Activated T-helper 2 cell treated with anti-CD3 and anti-CD28 coated beads, Interferon-gamma antibody, Interleukin-2, Interleukin-4, amounts not matched to agents 10 μg/mL and 5 μg/mL and 100 μg/mL, durations not matched to agents 14 hours and 24 hours and 36 hours (primary cell): ENCODE measurements at regions of chr5 and their contacts with region 1.

Region 1: GRCh38 chr5:76601470-76601869 is 21.7 kb downstream of the F2RL2 start:
- DNase-seq: no peak
- H3K4me3 Mint-ChIP-seq: no peak overlapping the region
- H3K27ac Mint-ChIP-seq: no peak overlapping the region
- H3K4me1 Mint-ChIP-seq: peaks cover 12% of the 10 kb centered on the region
- H3K27me3 Mint-ChIP-seq: no peaks in the 10 kb centered on the region

Region 2: DNA sequence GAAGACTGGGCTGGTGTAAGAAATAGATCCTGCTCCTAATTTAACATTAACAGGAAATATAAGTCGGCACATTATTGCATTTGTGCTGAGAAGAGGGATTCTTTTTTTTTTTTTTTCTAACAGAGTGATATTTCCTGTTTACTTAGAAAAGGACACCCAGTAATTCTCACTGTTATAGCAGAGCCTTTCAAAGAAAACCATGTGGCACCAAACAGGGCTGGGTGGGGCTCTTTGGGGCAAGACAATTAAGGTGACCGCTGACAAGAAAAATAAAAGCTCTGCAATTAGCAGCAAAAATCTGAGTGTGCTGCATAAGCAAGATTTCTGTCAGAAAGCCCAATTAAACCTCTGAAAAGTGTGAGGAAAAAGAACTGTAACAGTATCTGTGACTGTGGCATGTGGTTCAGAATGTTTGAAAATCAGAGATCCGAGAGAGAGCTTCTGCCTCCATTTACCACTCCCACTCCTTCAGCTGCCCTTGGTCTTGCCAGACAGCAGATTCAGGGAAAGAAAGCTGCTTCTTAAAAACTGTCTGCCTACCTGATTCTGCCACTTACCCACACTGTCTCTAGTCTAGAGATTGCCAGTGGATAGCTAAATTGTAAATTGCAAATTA is 275.5 kb before region 1 on chr5:
- intact Hi-C with region 1: no loop called
- DNase-seq: peak; percentile 40
- H3K4me3 Mint-ChIP-seq: peak overlapping the region; percentile 30
- H3K27ac Mint-ChIP-seq: peak overlapping the region; percentile 78
- H3K4me1 Mint-ChIP-seq: peaks cover 64% of the 10 kb centered on the region
- H3K27me3 Mint-ChIP-seq: peaks cover 3% of the 10 kb centered on the region

Region 3: GRCh38 chr5:76660360-76660759 is 58.9 kb after region 1 on chr5:
- intact Hi-C with region 1: no loop called
- DNase-seq: no peak
- H3K4me3 Mint-ChIP-seq: no peak overlapping the region
- H3K27ac Mint-ChIP-seq: no peak overlapping the region
- H3K4me1 Mint-ChIP-seq: no peaks in the 10 kb centered on the region
- H3K27me3 Mint-ChIP-seq: no peaks in the 10 kb centered on the region

Region 4: DNA sequence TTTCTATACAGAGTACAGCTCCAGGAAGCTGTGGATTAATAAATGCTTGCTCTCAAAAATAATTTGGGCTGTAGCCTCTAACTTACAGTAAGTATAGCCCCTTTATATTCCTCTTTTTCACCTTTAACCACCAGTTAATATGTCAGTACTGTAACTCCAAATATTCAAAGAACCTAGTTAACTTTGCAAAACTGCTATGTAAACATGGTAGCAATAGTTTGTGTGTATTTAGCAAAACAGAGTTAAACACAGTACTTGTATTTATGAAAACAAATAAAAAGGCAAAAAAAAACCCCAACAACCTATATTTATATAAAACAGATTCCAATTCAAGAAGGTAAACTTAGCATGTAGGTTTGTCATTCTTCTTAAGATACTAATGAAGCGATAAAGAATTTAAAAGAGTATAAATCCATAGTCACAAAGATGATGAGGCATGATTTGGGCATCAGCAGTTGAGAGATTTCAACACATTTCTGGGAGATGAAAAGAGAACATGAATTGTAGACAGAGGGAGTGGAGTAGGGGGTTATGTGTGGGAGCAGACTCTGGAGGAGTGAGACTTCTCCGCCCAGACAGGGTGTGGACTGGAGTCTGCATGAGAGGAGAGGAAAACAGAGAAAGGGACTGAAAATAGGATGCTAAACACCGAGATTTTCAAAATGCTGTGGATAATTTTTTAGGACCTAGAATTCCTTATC is 170.4 kb after region 1 on chr5:
- intact Hi-C with region 1: loop called (anchors 1 kb)
- DNase-seq: no peak
- H3K4me3 Mint-ChIP-seq: no peak overlapping the region
- H3K27ac Mint-ChIP-seq: no peak overlapping the region
- H3K4me1 Mint-ChIP-seq: peaks cover 5% of the 10 kb centered on the region
- H3K27me3 Mint-ChIP-seq: no peaks in the 10 kb centered on the region